Activated CD8-positive, alpha-beta T cell treated with anti-CD3 and anti-CD28 coated beads for 36 hours (primary cell): ENCODE measurements at regions of chr13 and their contacts with region 1.

Region 1: DNA sequence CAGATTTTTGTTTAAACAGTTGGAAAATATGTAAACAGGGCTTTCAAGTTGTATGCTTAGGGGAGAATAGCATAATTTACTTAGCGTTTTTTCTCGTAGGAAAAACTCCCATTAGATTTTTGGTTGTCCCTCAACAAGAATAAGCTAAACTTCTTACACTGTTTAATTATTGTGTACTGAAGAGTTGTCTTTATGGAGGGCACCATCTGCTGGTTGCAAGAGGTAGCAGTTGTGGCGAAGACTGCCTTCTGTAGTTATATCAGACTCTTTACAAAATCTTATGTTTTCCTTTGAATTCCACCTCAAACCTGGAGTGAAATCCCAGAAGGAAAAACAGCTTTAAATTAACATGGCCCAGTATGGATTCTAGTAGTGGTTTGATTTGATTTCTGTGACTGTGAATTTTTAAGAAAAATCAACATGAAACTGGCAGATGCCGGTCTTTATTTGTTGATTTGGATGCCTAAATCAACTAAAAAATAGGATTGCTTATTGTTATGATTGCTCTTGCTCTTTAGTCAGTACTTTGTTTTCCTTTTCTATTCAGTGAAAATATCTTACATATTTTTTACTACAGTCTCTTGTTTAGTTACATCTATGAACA is 53.4 kb downstream of the PDS5B start:
- DNase-seq: peak; percentile 64
- ATAC-seq: peak; percentile 76
- H3K4me3 Mint-ChIP-seq: no peak overlapping the region
- H3K27ac Mint-ChIP-seq: no peak overlapping the region
- H3K4me1 Mint-ChIP-seq: peaks cover 38% of the 10 kb centered on the region
- H3K27me3 Mint-ChIP-seq: no peaks in the 10 kb centered on the region
- CTCF ChIP-seq: peak; percentile 73

Region 2: GRCh38 chr13:32581177-32581786 is 58.3 kb before region 1 on chr13:
- CTCF ChIA-PET with region 1: interaction called, 31 read pairs
- POLR2A ChIA-PET with region 1: no interaction called
- intact Hi-C with region 1: loop called (anchors 2 kb)
- DNase-seq: no peak
- ATAC-seq: no peak
- H3K4me3 Mint-ChIP-seq: no peak overlapping the region
- H3K27ac Mint-ChIP-seq: no peak overlapping the region
- H3K4me1 Mint-ChIP-seq: peaks cover 9% of the 10 kb centered on the region
- H3K27me3 Mint-ChIP-seq: peaks cover 3% of the 10 kb centered on the region
- CTCF ChIP-seq: peak; percentile 84

Region 3: GRCh38 chr13:32586080-32586900 is 53.3 kb before region 1 on chr13 and contains the start of gene PDS5B:
- CTCF ChIA-PET with region 1: interaction called, 51 read pairs
- POLR2A ChIA-PET with region 1: interaction called, 8 read pairs
- intact Hi-C with region 1: loop called (anchors 2 kb)
- DNase-seq: peak; percentile 93
- ATAC-seq: peak; percentile 93
- H3K4me3 Mint-ChIP-seq: peak within 1 kb of the TSS; percentile 81
- H3K27ac Mint-ChIP-seq: peak within 1 kb of the TSS; percentile 91
- H3K4me1 Mint-ChIP-seq: peaks cover 35% of the 10 kb centered on the region
- H3K27me3 Mint-ChIP-seq: peaks cover 3% of the 10 kb centered on the region
- CTCF ChIP-seq: peak; percentile 78
- total RNA-seq, gene PDS5B: 44.1 to 46.6 TPM

Region 4: GRCh38 chr13:32592082-32592481 is 47.5 kb before region 1 on chr13:
- CTCF ChIA-PET with region 1: interaction called, 51 read pairs
- POLR2A ChIA-PET with region 1: interaction called, 8 read pairs
- intact Hi-C with region 1: loop called (anchors 2 kb)
- DNase-seq: no peak
- ATAC-seq: no peak
- H3K4me3 Mint-ChIP-seq: no peak overlapping the region
- H3K27ac Mint-ChIP-seq: no peak overlapping the region
- H3K4me1 Mint-ChIP-seq: peaks cover 66% of the 10 kb centered on the region
- H3K27me3 Mint-ChIP-seq: no peaks in the 10 kb centered on the region
- CTCF ChIP-seq: no peak

Region 5: GRCh38 chr13:32624441-32624840 is 15.2 kb before region 1 on chr13:
- CTCF ChIA-PET with region 1: interaction called, 15 read pairs
- POLR2A ChIA-PET with region 1: no interaction called
- intact Hi-C with region 1: no loop called
- DNase-seq: no peak
- ATAC-seq: no peak
- H3K4me3 Mint-ChIP-seq: no peak overlapping the region
- H3K27ac Mint-ChIP-seq: no peak overlapping the region
- H3K4me1 Mint-ChIP-seq: peaks cover 38% of the 10 kb centered on the region
- H3K27me3 Mint-ChIP-seq: no peaks in the 10 kb centered on the region
- CTCF ChIP-seq: no peak

Region 6: GRCh38 chr13:32650705-32651311 is 11.2 kb after region 1 on chr13:
- CTCF ChIA-PET with region 1: interaction called, 67 read pairs
- POLR2A ChIA-PET with region 1: no interaction called
- intact Hi-C with region 1: no loop called
- DNase-seq: peak; percentile 82
- ATAC-seq: peak; percentile 90
- H3K4me3 Mint-ChIP-seq: no peak overlapping the region
- H3K27ac Mint-ChIP-seq: peak overlapping the region; percentile 64
- H3K4me1 Mint-ChIP-seq: peaks cover 44% of the 10 kb centered on the region
- H3K27me3 Mint-ChIP-seq: no peaks in the 10 kb centered on the region
- CTCF ChIP-seq: peak; percentile 82